ENCODE measurements at regions of chr17 and their contacts with region 1.

Region 1: GRCh38 chr17:74736513-74737298 is at the start of gene RAB37:
- DNase-seq: peak; percentile 59
- H3K4me3 ChIP-seq: peak within 1 kb of the TSS; percentile 8 to 49 (median 25)
- H3K27ac ChIP-seq: peak within 1 kb of the TSS; percentile 47 to 72 (median 62)
- H3K4me1 ChIP-seq: peaks cover 10 to 31% (median 29%) of the 10 kb centered on the region in 4 donors
- H3K27me3 ChIP-seq: peaks cover 47% of the 10 kb centered on the region
- CTCF ChIP-seq: peak in 4 of 5 experiments; percentile 33 to 51 (median 44)
- EP300 ChIP-seq: no peak
- POLR2A ChIP-seq: peak; percentile 40
- total RNA-seq, gene RAB37: 5.2 to 10.5 (median 5.4) TPM in 3 of 4 donors, not detected in the other

Region 2: GRCh38 chr17:74659898-74660297 is 76.8 kb before region 1 on chr17:
- in situ Hi-C with region 1: loop called in 3 of 4 experiments (anchors 5 to 10 kb)
- intact Hi-C with region 1: no loop called
- DNase-seq: no peak
- H3K4me3 ChIP-seq: no peak overlapping the region
- H3K27ac ChIP-seq: no peak overlapping the region
- H3K4me1 ChIP-seq: peaks cover 0 to 8% (median 0%) of the 10 kb centered on the region in 4 donors
- H3K27me3 ChIP-seq: peaks cover 52% of the 10 kb centered on the region
- CTCF ChIP-seq: no peak
- EP300 ChIP-seq: no peak
- POLR2A ChIP-seq: no peak

Region 3: DNA sequence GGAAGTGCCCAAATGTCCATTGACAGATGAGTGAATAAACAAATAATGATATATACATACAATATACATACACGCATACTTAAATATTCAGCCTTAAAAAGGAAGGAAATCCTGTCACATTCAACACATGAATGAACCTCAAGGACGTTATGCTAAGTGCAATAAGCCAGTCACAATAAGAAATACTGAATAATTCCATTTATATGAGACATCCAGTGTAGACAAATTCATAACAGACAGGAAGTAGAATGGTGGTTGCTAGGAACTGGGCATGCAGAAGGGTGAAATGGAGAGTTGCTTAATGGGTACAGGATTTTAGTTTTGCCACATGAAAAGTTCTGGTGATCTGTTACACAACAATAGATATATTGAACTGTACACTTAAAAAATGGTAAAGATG is 975.7 kb after region 1 on chr17:
- in situ Hi-C with region 1: no loop called
- intact Hi-C with region 1: no loop called
- DNase-seq: no peak
- H3K4me3 ChIP-seq: no peak overlapping the region
- H3K27ac ChIP-seq: no peak overlapping the region
- H3K4me1 ChIP-seq: no peaks in the 10 kb centered on the region
- H3K27me3 ChIP-seq: no peaks in the 10 kb centered on the region
- CTCF ChIP-seq: no peak
- EP300 ChIP-seq: no peak
- POLR2A ChIP-seq: no peak